HCT116 (cell line): ENCODE measurements at regions of chr7 and their contacts with region 1.

Region 1: GRCh38 chr7:21945454-21946227 is at the start of gene CDCA7L:
- DNase-seq: peak; percentile 71
- ATAC-seq: peak; percentile 90
- H3K4me3 ChIP-seq: peak within 1 kb of the TSS; percentile 84 to 90
- H3K27ac ChIP-seq: peak within 1 kb of the TSS; percentile 93
- H3K4me1 ChIP-seq: peaks cover 12 to 19% of the 10 kb centered on the region in 2 experiments
- H3K27me3 ChIP-seq: no peaks in the 10 kb centered on the region
- CTCF ChIP-seq: no peak
- POLR2A ChIP-seq: peak; percentile 90
- RAD21 ChIP-seq: 0 out of 2 replicates have a peak, but pooled peaks have one; percentile 19
- total RNA-seq, gene CDCA7L: 107 TPM

Region 2: GRCh38 chr7:21972397-21972784 is 26.8 kb after region 1 on chr7:
- CTCF ChIA-PET with region 1: no interaction called
- POLR2A ChIA-PET with region 1: interaction called, 7 read pairs
- RAD21 ChIA-PET with region 1: no interaction called
- intact Hi-C with region 1: loop called (anchors 2 kb)
- DNase-seq: peak; percentile 72
- ATAC-seq: peak; percentile 96
- H3K4me3 ChIP-seq: peak overlapping the region; percentile 44 to 57
- H3K27ac ChIP-seq: peak overlapping the region; percentile 92
- H3K4me1 ChIP-seq: peaks cover 10 to 26% of the 10 kb centered on the region in 2 experiments; a peak in 3 of 4 replicates
- H3K27me3 ChIP-seq: no peaks in the 10 kb centered on the region
- CTCF ChIP-seq: no peak
- POLR2A ChIP-seq: no peak
- RAD21 ChIP-seq: no peak

Region 3: GRCh38 chr7:22025968-22026367 is 80.3 kb after region 1 on chr7:
- CTCF ChIA-PET with region 1: no interaction called
- POLR2A ChIA-PET with region 1: no interaction called
- RAD21 ChIA-PET with region 1: no interaction called
- intact Hi-C with region 1: no loop called
- DNase-seq: no peak
- ATAC-seq: no peak
- H3K4me3 ChIP-seq: no peak overlapping the region
- H3K27ac ChIP-seq: no peak overlapping the region
- H3K4me1 ChIP-seq: no peaks in the 10 kb centered on the region
- H3K27me3 ChIP-seq: no peaks in the 10 kb centered on the region
- CTCF ChIP-seq: no peak
- POLR2A ChIP-seq: no peak
- RAD21 ChIP-seq: no peak

Region 4: GRCh38 chr7:22137466-22137865 is 191.8 kb after region 1 on chr7:
- CTCF ChIA-PET with region 1: no interaction called
- POLR2A ChIA-PET with region 1: no interaction called
- RAD21 ChIA-PET with region 1: no interaction called
- intact Hi-C with region 1: no loop called
- DNase-seq: no peak
- ATAC-seq: no peak
- H3K4me3 ChIP-seq: no peak overlapping the region
- H3K27ac ChIP-seq: no peak overlapping the region
- H3K4me1 ChIP-seq: no peaks in the 10 kb centered on the region
- H3K27me3 ChIP-seq: no peaks in the 10 kb centered on the region
- CTCF ChIP-seq: no peak
- POLR2A ChIP-seq: no peak
- RAD21 ChIP-seq: no peak